ENCODE measurements at regions of chr5 and their contacts with region 1.

Region 1: DNA sequence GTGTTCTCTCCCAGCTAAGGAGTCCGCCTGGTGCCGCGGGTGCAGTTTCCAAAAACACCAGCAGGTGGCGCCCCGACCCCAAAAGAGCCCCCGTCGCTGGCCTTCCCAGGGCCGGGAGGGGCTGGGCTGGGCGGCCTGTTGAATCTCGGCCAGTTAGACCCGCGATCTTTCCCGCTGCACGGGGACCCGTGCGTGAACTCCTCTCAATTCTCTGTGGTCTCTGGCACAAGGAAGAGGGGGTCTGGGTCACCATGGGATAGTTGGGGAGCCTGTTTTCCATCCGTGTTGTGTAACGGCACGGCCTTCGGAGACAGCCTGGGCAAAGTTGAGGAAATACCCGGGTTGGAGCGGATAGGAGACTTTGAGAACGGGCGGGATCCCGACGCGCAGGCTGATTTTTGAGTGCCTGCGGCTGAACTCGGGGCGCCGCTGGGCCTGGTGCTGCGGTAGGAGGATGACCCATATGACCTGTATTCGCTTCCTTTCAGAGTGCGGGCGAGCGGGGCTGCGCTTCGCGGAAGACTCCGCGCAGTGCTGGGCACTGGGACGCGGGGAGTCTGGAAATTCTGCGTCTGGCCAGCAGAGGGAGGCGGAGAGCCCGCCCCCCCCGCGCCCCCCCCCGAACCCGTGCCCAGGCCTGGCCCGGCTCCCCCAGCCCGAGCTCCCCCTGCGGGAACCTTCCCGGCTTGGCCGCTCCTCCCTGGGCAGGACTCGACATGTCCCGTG is 7.9 kb upstream of the PSD2 start:
- DNase-seq: peak; percentile 65 to 83
- ATAC-seq: peak; percentile 77 to 79
- H3K4me3 ChIP-seq: peak overlapping the region; percentile 64 to 90 (median 67)
- H3K27ac ChIP-seq: peak overlapping the region; percentile 84 to 92 (median 88)
- H3K4me1 ChIP-seq: peaks cover 14 to 17% of the 10 kb centered on the region in 2 donors
- H3K27me3 ChIP-seq: no peaks in the 10 kb centered on the region
- CTCF ChIP-seq: peak; percentile 89 to 99 (median 97)
- POLR2A ChIP-seq: no peak

Region 2: DNA sequence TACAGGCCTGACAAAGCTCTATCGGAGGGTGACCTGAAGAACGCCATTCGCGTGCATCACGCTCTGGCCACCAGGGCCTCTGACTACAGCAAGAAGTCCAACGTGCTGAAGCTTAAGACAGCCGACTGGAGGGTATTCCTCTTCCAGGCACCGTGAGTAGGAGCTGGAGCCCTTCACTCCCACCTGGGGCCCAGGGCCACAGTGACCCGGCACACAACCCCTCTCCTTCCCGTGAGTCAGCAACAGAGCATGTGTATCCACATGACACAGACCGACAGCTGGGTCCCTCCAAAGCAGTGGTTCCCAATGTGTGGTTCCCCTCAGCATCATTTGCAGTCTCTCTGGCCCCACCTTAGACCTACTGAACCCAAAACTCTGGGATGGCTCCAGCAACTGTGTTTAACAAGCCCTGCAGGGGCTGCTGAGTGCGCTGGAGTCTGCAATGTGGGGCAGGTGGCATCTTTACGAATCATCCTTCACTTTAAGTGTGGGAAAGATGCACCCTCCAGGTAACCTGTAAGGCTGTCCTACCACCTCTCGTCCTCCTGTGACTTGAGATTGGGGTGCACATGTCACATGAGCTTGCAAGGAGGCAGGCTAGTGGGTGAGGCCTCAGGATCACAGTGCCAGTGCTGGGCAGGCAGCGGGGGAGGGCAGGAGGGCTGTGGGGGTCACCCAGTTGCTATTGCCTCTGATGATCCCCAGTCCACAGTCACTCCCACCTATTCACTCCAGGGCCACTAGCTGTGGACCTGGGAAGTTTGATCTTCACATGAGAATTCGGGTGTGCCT is 50.1 kb after region 1 on chr5:
- in situ Hi-C with region 1: loop called in 1 of 4 experiments (anchors 10 kb)
- intact Hi-C with region 1: no loop called
- DNase-seq: peak in 1 of 2 donors; percentile 11
- ATAC-seq: no peak
- H3K4me3 ChIP-seq: no peak overlapping the region
- H3K27ac ChIP-seq: no peak overlapping the region
- H3K4me1 ChIP-seq: no peaks in the 10 kb centered on the region
- H3K27me3 ChIP-seq: no peaks in the 10 kb centered on the region
- CTCF ChIP-seq: no peak
- POLR2A ChIP-seq: no peak

Region 3: GRCh38 chr5:139863855-139864558 is 76.3 kb after region 1 on chr5:
- in situ Hi-C with region 1: loop called in 3 of 4 experiments (anchors 5 to 10 kb)
- intact Hi-C with region 1: loop called (anchors 1 kb)
- DNase-seq: peak in 1 of 2 donors; percentile 52
- ATAC-seq: peak; percentile 72 to 73
- H3K4me3 ChIP-seq: no peak overlapping the region
- H3K27ac ChIP-seq: peak overlapping the region in 2 of 4 donors; percentile 29 to 47
- H3K4me1 ChIP-seq: peaks cover 9 to 13% of the 10 kb centered on the region in 2 donors
- H3K27me3 ChIP-seq: no peaks in the 10 kb centered on the region
- CTCF ChIP-seq: peak; percentile 70 to 84 (median 83)
- POLR2A ChIP-seq: no peak

Region 4: DNA sequence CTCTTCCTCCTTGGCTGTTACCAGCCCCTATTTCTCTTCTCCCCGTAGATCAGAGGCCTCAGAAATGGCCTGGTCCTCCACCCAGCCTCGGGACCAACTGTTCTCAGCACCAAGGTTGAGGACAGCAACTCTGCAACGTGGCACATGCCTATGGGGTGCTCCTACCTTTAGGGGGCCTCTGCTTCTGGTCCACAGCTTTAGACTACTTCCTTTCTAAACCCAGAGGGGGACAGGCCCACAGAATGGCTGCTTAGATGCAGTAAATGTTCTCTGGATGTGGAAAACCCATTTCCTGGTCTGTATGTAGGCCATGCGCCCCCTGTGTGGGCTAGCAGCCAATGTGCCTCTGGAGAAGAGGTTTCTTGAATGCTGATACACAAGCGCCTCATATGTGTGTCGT is 186.9 kb after region 1 on chr5:
- in situ Hi-C with region 1: loop called (anchors 5 to 10 kb)
- intact Hi-C with region 1: no loop called
- DNase-seq: no peak
- ATAC-seq: no peak
- H3K4me3 ChIP-seq: no peak overlapping the region
- H3K27ac ChIP-seq: no peak overlapping the region
- H3K4me1 ChIP-seq: peaks cover 25 to 36% of the 10 kb centered on the region in 2 donors
- H3K27me3 ChIP-seq: no peaks in the 10 kb centered on the region
- CTCF ChIP-seq: no peak
- POLR2A ChIP-seq: no peak

Region 5: DNA sequence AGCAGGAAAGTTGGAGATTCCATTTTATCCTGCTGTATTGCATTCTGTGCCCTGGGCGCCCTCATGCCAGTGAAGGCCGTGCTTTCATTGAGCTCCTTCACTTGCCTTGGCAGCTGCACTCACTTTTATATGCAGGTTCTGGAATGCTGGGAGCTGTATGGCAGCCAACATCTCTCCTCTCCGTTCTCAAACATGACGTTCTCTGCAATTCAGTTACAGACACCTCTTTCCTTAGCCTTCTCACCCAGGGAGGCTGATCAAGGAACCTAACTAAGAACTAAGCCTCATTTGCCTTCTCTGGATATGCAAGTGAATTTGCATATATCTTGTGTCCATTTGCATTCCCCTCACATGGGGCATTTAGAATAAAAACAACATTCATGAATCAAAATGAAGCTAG is 296.8 kb after region 1 on chr5:
- in situ Hi-C with region 1: loop called in 1 of 4 experiments (anchors 10 kb)
- intact Hi-C with region 1: no loop called
- DNase-seq: no peak
- ATAC-seq: no peak
- H3K4me3 ChIP-seq: no peak overlapping the region
- H3K27ac ChIP-seq: no peak overlapping the region
- H3K4me1 ChIP-seq: no peaks in the 10 kb centered on the region
- H3K27me3 ChIP-seq: peaks cover 0 to 3% (median 0%) of the 10 kb centered on the region in 3 donors
- CTCF ChIP-seq: no peak
- POLR2A ChIP-seq: no peak

Region 6: GRCh38 chr5:140357726-140358093 is 570.0 kb after region 1 on chr5:
- in situ Hi-C with region 1: loop called in 1 of 4 experiments (anchors 25 kb)
- intact Hi-C with region 1: no loop called
- DNase-seq: peak; percentile 63 to 79
- ATAC-seq: peak; percentile 84 to 91
- H3K4me3 ChIP-seq: peak overlapping the region in 3 of 4 donors; percentile 25 to 59 (median 37)
- H3K27ac ChIP-seq: no peak overlapping the region
- H3K4me1 ChIP-seq: peaks cover 3 to 8% of the 10 kb centered on the region in 2 donors
- H3K27me3 ChIP-seq: no peaks in the 10 kb centered on the region
- CTCF ChIP-seq: peak; percentile 78 to 94 (median 86)
- POLR2A ChIP-seq: no peak

Measured in gastrocnemius medialis (tissue), 4 donors.